ENCODE measurements at regions of chr16 and their contacts with region 1.

Region 1: GRCh38 chr16:3173892-3174617 is 13.9 kb upstream of the OR1F1 start:
- DNase-seq: no peak
- ATAC-seq: peak; percentile 16
- H3K4me3 ChIP-seq: peak overlapping the region; percentile 22
- H3K27ac ChIP-seq: peak overlapping the region; percentile 25; the same call in 1 of the 2 replicates
- H3K4me1 ChIP-seq: peaks cover 35% of the 10 kb centered on the region
- H3K27me3 ChIP-seq: no peaks in the 10 kb centered on the region; a peak in 1 of 4 replicates
- CTCF ChIP-seq: peak; percentile 30 to 55 (median 54); a peak in 5 of 6 replicates
- EP300 ChIP-seq: no peak
- POLR2A ChIP-seq: no peak; the same call in 1 of the 2 replicates
- RAD21 ChIP-seq: no peak

Region 2: GRCh38 chr16:3003582-3004302 is 170.3 kb before region 1 on chr16:
- CTCF ChIA-PET with region 1: no interaction called
- POLR2A ChIA-PET with region 1: no interaction called
- RAD21 ChIA-PET with region 1: no interaction called
- SMC1A ChIA-PET with region 1: no interaction called
- in situ Hi-C with region 1: no loop called
- intact Hi-C with region 1: no loop called
- DNase-seq: peak; percentile 97
- ATAC-seq: peak; percentile 100
- H3K4me3 ChIP-seq: no peak overlapping the region
- H3K27ac ChIP-seq: no peak overlapping the region
- H3K4me1 ChIP-seq: peaks cover 17% of the 10 kb centered on the region
- H3K27me3 ChIP-seq: peaks cover 0 to 7% of the 10 kb centered on the region in 2 experiments; a peak in 3 of 4 replicates
- CTCF ChIP-seq: peak; percentile 56 to 75 (median 64)
- EP300 ChIP-seq: no peak
- POLR2A ChIP-seq: no peak
- RAD21 ChIP-seq: peak; percentile 71

Region 3: GRCh38 chr16:3029537-3030402 is 144.3 kb before region 1 on chr16:
- CTCF ChIA-PET with region 1: interaction called, 20 read pairs
- POLR2A ChIA-PET with region 1: no interaction called
- RAD21 ChIA-PET with region 1: no interaction called
- SMC1A ChIA-PET with region 1: interaction called, 3 read pairs
- in situ Hi-C with region 1: no loop called
- intact Hi-C with region 1: no loop called
- DNase-seq: no peak
- ATAC-seq: no peak
- H3K4me3 ChIP-seq: no peak overlapping the region
- H3K27ac ChIP-seq: no peak overlapping the region
- H3K4me1 ChIP-seq: peaks cover 6% of the 10 kb centered on the region
- H3K27me3 ChIP-seq: peaks cover 7 to 8% of the 10 kb centered on the region in 2 experiments
- CTCF ChIP-seq: no peak
- EP300 ChIP-seq: no peak
- POLR2A ChIP-seq: peak; percentile 22; the same call in 1 of the 2 replicates
- RAD21 ChIP-seq: no peak

Region 4: DNA sequence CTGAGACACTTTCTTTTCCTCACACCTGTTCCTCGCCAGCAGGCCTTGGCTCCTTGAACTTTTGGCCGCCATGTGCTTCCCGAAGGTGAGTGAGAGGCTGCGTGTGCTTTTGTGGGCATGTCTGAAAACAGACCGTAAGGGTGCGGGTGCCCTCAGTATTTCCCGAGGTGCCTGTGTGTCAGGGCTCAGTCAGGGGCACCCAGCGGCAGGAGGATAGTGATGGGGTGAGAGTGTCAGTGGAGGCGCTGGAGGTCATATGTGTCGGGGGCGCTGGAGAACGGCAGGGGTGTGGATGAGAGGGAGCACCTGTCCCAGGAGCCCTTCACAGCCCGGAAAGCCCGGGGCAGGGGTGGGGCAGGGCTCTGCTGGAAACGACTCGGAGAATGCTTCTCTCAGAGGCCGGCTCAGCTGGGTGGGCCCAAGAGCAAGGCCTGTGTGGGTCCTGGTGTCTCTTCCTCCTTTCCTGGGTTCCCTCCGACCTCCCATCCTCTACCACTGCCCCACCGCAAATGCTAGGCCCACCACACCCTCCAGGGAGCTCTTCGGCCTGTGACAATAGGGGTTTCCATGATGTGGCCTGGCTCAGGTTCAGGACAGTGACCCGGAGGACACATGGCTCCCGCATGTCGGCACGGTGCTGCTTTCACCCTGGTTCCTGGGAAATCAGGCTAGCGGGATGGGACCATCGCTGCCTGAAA is 108.2 kb before region 1 on chr16:
- CTCF ChIA-PET with region 1: no interaction called
- POLR2A ChIA-PET with region 1: no interaction called
- RAD21 ChIA-PET with region 1: no interaction called
- SMC1A ChIA-PET with region 1: no interaction called
- in situ Hi-C with region 1: no loop called
- intact Hi-C with region 1: no loop called
- DNase-seq: no peak
- ATAC-seq: peak; percentile 7
- H3K4me3 ChIP-seq: peak overlapping the region; percentile 62
- H3K27ac ChIP-seq: peak overlapping the region; percentile 86
- H3K4me1 ChIP-seq: peaks cover 19% of the 10 kb centered on the region
- H3K27me3 ChIP-seq: no peaks in the 10 kb centered on the region
- CTCF ChIP-seq: no peak
- EP300 ChIP-seq: no peak
- POLR2A ChIP-seq: no peak
- RAD21 ChIP-seq: no peak

Region 5: GRCh38 chr16:3134564-3135417 is 39.3 kb before region 1 on chr16 and contains the start of gene ZNF213:
- CTCF ChIA-PET with region 1: interaction called, 56 read pairs
- POLR2A ChIA-PET with region 1: interaction called, 10 read pairs
- RAD21 ChIA-PET with region 1: interaction called, 5 read pairs
- SMC1A ChIA-PET with region 1: interaction called, 10 read pairs
- in situ Hi-C with region 1: no loop called
- intact Hi-C with region 1: no loop called
- DNase-seq: peak; percentile 95
- ATAC-seq: peak; percentile 97
- H3K4me3 ChIP-seq: peak within 1 kb of the TSS; percentile 99
- H3K27ac ChIP-seq: peak within 1 kb of the TSS; percentile 95
- H3K4me1 ChIP-seq: peaks cover 5% of the 10 kb centered on the region; the same call in 1 of the 2 replicates
- H3K27me3 ChIP-seq: no peaks in the 10 kb centered on the region
- CTCF ChIP-seq: no peak
- EP300 ChIP-seq: no peak
- POLR2A ChIP-seq: peak; percentile 83
- RAD21 ChIP-seq: no peak
- polyA plus RNA-seq, gene ZNF213: 0.55 to 0.58 TPM

Region 6: DNA sequence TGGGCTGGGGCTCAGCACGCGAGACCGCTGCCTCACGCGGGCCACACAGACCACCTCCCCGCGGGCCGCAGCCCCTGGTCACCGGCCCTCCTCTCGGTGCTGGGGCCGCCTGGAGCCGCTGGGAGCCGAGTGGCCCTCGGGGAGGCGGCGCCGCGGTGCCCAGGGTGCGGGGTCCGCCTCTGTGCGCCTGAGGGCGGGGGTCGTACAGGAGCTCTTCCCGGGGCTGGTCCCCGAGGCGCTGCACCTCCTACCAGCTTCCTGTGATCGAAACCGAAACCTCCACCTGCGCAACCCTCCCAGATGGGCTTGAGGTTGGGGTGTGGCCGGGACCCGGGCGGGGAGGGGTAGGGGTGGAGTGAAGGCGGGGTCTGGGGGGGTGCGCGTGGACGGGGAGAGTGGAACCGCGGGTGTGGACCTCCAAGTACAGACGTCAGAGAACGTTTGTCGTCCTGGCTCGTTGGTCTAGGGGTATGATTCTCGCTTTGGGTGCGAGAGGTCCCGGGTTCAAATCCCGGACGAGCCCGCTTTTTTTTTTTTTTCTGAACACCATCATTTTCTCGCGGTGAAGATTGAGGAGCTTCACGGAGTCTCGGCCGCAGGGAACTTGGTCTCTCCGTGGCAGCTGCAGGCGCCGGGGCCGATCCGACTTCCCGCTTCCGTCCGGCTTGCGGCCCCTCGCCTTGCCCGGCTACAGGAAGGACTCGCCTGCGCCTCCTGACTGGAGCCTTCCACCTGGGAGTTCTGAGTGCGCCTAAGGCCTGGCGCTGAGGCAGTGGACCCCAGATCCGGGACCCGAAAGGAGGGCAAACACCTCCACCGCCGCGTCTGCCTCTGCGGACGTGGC is 15.4 kb before region 1 on chr16:
- CTCF ChIA-PET with region 1: interaction called, 4 read pairs
- POLR2A ChIA-PET with region 1: interaction called, 16 read pairs
- RAD21 ChIA-PET with region 1: interaction called, 11 read pairs
- SMC1A ChIA-PET with region 1: interaction called, 4 read pairs
- in situ Hi-C with region 1: no loop called
- intact Hi-C with region 1: loop called (anchors 2 kb)
- DNase-seq: no peak
- ATAC-seq: peak; percentile 88
- H3K4me3 ChIP-seq: peak overlapping the region; percentile 96
- H3K27ac ChIP-seq: peak overlapping the region; percentile 41
- H3K4me1 ChIP-seq: peaks cover 17% of the 10 kb centered on the region
- H3K27me3 ChIP-seq: peaks cover 0 to 2% of the 10 kb centered on the region in 2 experiments; a peak in 1 of 4 replicates
- CTCF ChIP-seq: no peak
- EP300 ChIP-seq: no peak
- POLR2A ChIP-seq: peak; percentile 67; the same call in 1 of the 2 replicates
- RAD21 ChIP-seq: no peak

Region 7: DNA sequence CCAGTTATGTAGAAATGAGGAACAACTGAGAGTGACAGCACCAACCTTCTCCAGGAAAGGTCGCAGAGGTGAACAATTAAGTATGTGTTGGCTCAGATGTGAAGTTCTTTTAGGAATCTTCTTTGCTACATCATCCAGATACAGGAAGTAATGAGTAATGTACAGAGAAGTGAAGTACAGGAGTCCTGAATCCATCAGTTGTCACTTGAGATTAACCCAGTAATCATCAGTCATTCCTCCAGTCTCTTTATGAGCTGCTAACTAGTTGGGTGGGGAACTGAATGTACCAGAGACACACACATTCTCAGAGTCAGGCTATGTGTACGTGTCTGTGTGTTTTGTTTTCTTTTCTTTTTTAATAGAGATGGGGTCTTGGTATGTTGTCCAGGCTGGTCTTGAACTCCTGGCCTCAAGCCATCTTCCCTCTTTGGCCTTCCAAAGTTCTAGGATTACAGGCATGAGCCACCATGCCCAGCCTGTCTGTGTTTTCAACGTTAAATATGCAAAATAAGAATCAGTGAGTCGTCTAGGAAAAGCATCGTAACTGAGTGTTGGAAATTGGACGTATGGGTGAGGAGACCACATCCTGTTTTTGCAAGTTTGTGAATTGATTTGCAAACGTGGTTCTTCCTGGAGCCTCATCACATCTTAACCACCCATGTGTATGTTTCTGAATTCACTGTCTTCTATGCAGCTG is 41.0 kb after region 1 on chr16:
- CTCF ChIA-PET with region 1: no interaction called
- POLR2A ChIA-PET with region 1: no interaction called
- RAD21 ChIA-PET with region 1: no interaction called
- SMC1A ChIA-PET with region 1: no interaction called
- in situ Hi-C with region 1: no loop called
- intact Hi-C with region 1: no loop called
- DNase-seq: no peak
- ATAC-seq: no peak
- H3K4me3 ChIP-seq: peak overlapping the region; percentile 24; the same call in 1 of the 2 replicates
- H3K27ac ChIP-seq: no peak overlapping the region
- H3K4me1 ChIP-seq: peaks cover 4% of the 10 kb centered on the region
- H3K27me3 ChIP-seq: no peaks in the 10 kb centered on the region
- CTCF ChIP-seq: no peak
- EP300 ChIP-seq: no peak
- POLR2A ChIP-seq: no peak
- RAD21 ChIP-seq: no peak